HEK293T (cell line): ENCODE measurements at regions of chr17 and their contacts with region 1.

Region 1: DNA sequence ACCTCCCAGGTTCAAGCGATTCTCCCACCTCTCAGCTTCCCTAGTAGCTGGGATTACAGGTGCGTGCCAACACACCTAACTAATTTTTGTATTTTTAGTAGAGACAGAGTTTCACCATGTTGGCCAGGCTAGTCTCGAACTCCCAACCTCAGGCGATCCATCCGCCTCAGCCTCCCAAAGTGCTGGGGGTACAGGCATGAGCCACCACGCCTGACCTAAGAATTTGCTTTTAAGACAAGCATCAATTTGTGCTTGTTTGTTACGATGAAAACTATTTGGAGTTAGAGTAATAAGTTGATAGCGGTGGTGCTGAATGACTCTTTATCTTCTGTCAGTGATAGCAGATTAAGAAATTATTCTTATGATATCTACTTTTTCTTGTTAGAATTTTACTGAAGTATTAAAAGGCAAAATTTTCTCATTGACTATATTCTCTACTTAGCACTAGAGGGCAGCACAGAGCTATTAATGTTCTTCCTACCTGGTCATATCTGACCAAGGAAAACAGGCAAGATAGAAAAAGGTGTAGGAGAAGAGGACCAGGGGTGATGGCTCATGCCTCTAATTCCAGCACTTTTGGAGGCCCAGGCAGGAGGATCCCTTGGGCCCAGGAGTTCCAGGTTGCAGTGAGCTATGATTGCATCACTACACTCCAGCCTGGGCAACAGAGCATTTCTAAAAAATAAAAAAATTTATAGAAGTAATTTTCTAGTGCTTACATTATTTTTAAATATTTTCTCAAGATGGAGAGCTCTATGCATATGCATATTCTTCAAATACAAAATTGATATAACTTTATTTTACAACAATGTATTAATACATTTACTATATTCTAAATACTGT is 24.5 kb downstream of the STXBP4 start:
- DNase-seq: peak; percentile 46

Region 2: DNA sequence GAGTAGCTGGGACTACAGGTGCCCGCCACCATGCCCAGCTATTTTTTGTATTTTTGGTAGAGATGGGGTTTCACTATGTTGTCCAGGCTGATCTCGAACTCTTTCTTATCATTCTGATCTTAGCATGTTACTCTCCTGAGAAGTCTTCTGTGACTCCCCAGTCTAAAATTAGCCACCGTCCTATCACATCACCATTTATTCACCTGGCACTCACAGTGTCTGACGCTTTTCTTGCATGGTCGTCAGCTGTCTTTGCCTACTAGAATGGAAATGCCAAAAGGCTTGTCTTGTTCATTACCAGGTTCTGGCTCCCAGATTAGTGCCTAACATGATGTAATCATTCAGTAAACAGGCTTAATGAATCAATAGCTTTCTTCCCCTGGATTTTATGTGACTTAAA is 68.6 kb before region 1 on chr17:
- CTCF ChIA-PET with region 1: no interaction called
- POLR2A ChIA-PET with region 1: no interaction called
- DNase-seq: no peak

Region 3: DNA sequence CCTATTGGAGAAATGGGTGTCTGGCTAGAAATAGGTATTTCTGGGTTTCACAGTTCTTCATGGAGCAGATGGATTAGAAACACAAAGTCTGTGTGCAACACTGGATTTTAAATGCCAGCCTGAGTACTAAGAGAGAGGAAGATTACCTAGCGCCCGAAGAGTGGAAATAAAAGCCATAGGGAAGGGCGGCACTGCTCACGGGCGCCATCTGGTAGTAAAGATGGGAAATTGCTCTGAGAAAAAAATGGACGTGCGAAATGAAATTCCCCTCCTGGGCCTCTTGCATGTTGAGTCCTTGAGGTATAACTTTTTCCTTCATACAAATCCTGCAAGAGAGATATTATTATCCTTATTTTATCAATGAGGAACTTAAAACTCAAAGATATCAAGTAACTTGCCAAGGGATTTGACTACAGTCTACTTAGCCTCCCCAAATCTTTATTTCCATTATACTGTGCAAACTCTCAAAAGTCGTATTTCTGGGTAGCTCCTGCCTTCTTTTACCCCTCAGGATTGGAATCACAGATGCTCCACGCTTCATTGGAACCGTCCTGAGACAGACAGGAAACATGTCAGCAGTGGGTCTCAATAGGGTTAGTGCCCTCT is 355.8 kb after region 1 on chr17:
- CTCF ChIA-PET with region 1: interaction called, 19 read pairs
- POLR2A ChIA-PET with region 1: no interaction called
- DNase-seq: peak; percentile 65

Region 4: GRCh38 chr17:55356434-55357328 is 363.7 kb after region 1 on chr17:
- CTCF ChIA-PET with region 1: interaction called, 16 read pairs
- POLR2A ChIA-PET with region 1: no interaction called
- DNase-seq: peak; percentile 82